Calu3 (cell line): ENCODE measurements at regions of chr20 and their contacts with region 1.

Region 1: GRCh38 chr20:4978050-4978918 is 23.0 kb downstream of the SLC23A2 start:
- DNase-seq: no peak
- H3K4me3 Mint-ChIP-seq: no peak overlapping the region
- H3K27ac Mint-ChIP-seq: no peak overlapping the region
- H3K4me1 Mint-ChIP-seq: peaks cover 5% of the 10 kb centered on the region
- H3K27me3 Mint-ChIP-seq: no peaks in the 10 kb centered on the region
- CTCF ChIP-seq: no peak

Region 2: DNA sequence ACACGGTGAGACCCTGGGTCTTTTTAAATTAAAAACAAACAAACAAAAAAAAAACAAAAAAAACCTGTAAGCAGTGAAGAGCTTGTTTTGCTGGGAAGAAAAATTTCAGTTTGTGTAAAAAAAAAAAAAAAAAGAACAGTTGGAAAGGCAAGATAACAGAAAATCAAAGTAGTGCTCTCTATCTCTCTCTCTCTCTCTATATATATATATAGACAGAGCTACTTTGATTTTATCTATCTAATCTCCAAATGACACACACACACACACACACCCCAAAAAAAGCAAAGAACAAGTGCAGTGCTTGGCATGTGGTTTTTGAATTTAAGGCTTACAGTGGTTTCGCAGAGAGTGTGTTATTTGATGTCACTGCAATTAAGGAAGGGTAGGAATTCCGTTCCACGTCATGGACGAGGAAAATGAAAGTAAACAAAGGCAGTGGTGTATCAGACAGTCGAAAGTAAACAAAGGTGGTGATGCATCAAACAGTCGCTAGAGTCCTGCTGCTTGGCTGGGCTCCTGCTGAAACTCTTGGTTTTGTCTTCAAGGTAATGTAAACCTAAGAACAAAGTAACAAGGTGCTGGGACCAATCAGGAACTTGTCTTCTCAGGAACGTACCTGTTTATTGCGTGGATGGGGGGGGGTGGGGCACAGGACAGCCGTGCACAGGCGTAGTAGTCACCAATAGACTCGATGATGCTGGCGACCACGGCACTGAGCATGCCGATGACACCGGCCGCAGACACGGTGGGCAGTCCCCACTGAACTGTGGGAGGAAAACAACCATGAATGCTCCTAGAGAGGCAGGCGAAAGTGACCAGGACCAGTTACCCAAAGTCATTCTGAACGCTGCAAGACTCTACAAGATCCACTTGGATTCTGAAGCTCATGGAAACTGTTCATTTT is 108.7 kb before region 1 on chr20:
- CTCF ChIA-PET with region 1: interaction called, 12 read pairs
- intact Hi-C with region 1: no loop called
- DNase-seq: no peak
- H3K4me3 Mint-ChIP-seq: no peak overlapping the region
- H3K27ac Mint-ChIP-seq: no peak overlapping the region
- H3K4me1 Mint-ChIP-seq: peaks cover 9% of the 10 kb centered on the region
- H3K27me3 Mint-ChIP-seq: no peaks in the 10 kb centered on the region
- CTCF ChIP-seq: no peak

Region 3: GRCh38 chr20:4956200-4956810 is 22.0 kb before region 1 on chr20:
- CTCF ChIA-PET with region 1: no interaction called
- intact Hi-C with region 1: no loop called
- DNase-seq: peak; percentile 8
- H3K4me3 Mint-ChIP-seq: no peak overlapping the region
- H3K27ac Mint-ChIP-seq: no peak overlapping the region
- H3K4me1 Mint-ChIP-seq: peaks cover 2% of the 10 kb centered on the region
- H3K27me3 Mint-ChIP-seq: no peaks in the 10 kb centered on the region
- CTCF ChIP-seq: peak; percentile 22